BJ (cell line): ENCODE measurements at regions of chr1 and their contacts with region 1.

Region 1: GRCh38 chr1:7975212-7975865 is 13.8 kb downstream of the PARK7 start:
- DNase-seq: no peak
- H3K4me3 ChIP-seq: no peak overlapping the region
- H3K27me3 ChIP-seq: no peaks in the 10 kb centered on the region
- CTCF ChIP-seq: peak; percentile 94

Region 2: GRCh38 chr1:7989762-7990428 is 14.6 kb after region 1 on chr1:
- CTCF ChIA-PET with region 1: interaction called, 12 read pairs
- POLR2A ChIA-PET with region 1: no interaction called
- DNase-seq: no peak
- H3K4me3 ChIP-seq: no peak overlapping the region
- H3K27me3 ChIP-seq: no peaks in the 10 kb centered on the region
- CTCF ChIP-seq: no peak

Region 3: GRCh38 chr1:8097077-8097799 is 121.9 kb after region 1 on chr1:
- CTCF ChIA-PET with region 1: no interaction called
- POLR2A ChIA-PET with region 1: no interaction called
- DNase-seq: peak; percentile 90
- H3K4me3 ChIP-seq: no peak overlapping the region
- H3K27me3 ChIP-seq: no peaks in the 10 kb centered on the region
- CTCF ChIP-seq: no peak